Activated CD4-positive, alpha-beta memory T cell treated with anti-CD3 and anti-CD28 coated beads for 36 hours (primary cell): ENCODE measurements at regions of chr18 and their contacts with region 1.

Region 1: DNA sequence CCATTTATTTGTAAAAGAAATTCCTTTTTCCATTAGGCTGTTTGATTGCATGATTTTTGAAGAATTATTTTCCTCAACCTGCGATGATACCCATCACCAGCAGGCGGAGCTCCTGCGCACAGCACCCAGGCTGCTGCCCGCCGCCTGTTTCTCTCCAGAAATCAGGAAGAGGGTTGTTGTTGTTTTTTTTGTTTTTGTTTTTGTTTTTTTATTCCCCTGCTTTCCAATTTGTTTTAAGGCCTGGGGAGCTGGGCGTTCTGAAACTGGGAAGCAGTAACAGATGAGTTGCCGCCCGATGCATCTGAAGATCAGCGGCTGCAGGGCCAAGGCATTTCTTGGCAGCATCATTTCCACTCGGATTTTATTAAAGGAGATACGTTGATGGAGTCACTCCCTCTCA is 132.1 kb downstream of the MBP start:
- DNase-seq: peak; percentile 62
- H3K4me3 Mint-ChIP-seq: no peak overlapping the region
- H3K27ac Mint-ChIP-seq: no peak overlapping the region
- H3K4me1 Mint-ChIP-seq: peaks cover 17% of the 10 kb centered on the region
- H3K27me3 Mint-ChIP-seq: no peaks in the 10 kb centered on the region

Region 2: DNA sequence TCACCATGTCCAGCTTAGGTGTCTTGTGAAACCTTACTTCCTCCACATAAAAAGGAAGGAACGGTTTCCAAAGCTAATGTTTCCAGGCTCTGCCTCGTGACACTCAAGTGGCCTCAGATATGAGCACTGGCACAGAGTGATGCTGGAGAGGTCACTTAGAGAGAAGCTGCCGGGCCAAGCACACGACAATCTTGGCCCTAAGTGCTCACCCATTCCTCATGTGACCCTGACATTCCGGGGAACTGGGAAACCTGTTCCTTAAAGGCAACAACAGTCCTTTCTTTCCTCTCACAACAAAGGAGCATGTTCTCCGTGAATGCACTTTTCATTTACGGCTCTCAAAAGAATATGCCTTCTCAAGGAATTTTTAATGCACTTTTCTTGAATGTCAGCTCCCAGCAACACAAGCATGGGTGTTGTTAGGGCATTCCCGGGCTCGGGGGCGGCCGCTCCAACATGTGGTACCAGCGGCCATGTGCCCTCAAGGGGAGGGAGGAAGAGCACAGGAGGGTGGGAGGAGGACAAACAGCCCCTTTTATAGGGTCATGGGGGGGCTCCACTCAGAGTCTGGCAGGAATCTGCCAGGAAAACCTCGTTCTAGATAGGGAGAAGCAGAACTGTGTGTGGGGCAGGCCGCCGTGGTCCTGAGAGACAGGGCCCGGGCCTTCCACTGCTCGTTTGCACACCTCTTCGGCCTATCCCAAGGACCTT is 13.4 kb after region 1 on chr18:
- CTCF ChIA-PET with region 1: interaction called, 26 read pairs
- POLR2A ChIA-PET with region 1: no interaction called
- intact Hi-C with region 1: no loop called
- DNase-seq: no peak
- H3K4me3 Mint-ChIP-seq: no peak overlapping the region
- H3K27ac Mint-ChIP-seq: no peak overlapping the region
- H3K4me1 Mint-ChIP-seq: peaks cover 19% of the 10 kb centered on the region
- H3K27me3 Mint-ChIP-seq: no peaks in the 10 kb centered on the region

Region 3: DNA sequence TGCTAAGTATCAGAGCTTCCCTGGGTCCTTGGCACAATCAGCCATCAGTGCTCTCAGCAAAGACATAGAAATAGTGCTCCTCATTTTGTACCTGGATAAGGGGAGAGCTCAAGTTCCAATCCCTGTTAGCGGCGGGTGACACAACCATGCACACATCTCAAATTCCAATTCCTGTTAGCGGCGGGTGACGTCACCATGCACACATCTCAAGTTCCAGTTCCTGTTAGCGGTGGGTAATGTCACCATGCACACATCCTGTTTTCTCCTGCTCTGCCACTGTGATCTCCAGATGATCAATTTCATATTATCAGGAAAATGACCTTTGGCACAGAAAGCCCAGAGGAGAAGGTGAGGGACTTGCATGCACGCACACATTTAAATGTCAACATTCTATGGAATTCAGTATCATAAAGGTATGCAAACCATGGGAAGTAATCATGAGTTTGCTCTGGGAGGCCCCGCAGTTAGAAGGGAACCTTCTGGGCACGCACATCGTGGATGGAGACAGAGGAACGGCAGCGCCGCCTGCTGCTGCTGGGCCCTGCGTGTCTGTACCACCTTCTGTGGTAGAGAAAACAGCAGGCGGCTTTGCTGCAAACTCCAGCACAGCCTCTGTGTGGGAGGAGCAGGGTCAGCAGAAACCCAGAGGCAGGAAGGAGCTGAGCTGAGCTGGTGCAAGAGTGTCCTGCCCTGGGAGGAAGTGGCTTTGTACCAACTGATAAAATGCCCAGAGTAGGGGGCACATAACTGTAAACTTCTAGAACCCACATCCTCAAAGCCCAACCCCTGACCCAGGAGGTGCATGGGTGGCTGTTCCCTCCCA is 54.3 kb after region 1 on chr18:
- CTCF ChIA-PET with region 1: interaction called, 88 read pairs
- POLR2A ChIA-PET with region 1: interaction called, 3 read pairs
- intact Hi-C with region 1: no loop called
- DNase-seq: peak; percentile 90
- H3K4me3 Mint-ChIP-seq: peak overlapping the region; percentile 81
- H3K27ac Mint-ChIP-seq: peak overlapping the region; percentile 96
- H3K4me1 Mint-ChIP-seq: peaks cover 72% of the 10 kb centered on the region
- H3K27me3 Mint-ChIP-seq: no peaks in the 10 kb centered on the region

Region 4: GRCh38 chr18:77108001-77108692 is 107.6 kb after region 1 on chr18:
- CTCF ChIA-PET with region 1: interaction called, 10 read pairs
- POLR2A ChIA-PET with region 1: no interaction called
- intact Hi-C with region 1: loop called (anchors 2 kb)
- DNase-seq: peak; percentile 79
- H3K4me3 Mint-ChIP-seq: peak overlapping the region; percentile 31
- H3K27ac Mint-ChIP-seq: peak overlapping the region; percentile 71
- H3K4me1 Mint-ChIP-seq: peaks cover 92% of the 10 kb centered on the region
- H3K27me3 Mint-ChIP-seq: no peaks in the 10 kb centered on the region

Region 5: DNA sequence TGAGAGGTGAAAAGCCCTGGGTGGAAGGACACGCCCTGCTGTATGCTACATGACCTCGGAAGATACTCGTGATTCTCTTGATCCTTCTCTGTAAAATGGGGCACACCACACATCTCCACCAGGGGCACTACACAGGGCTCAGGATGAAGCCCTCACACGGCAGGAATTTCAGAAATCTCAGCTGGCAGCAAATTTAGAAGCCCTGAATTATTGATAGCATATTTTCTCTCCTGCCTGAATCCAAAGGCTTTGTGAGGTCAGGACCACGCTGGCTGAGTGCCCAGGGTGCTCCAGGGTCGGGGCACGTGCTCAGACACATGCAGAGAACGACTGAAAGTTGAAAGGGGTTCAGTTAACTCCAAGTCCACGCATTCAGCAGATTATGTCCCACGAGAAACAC is 207.0 kb after region 1 on chr18:
- CTCF ChIA-PET with region 1: interaction called, 92 read pairs
- POLR2A ChIA-PET with region 1: no interaction called
- intact Hi-C with region 1: loop called (anchors 1 kb)
- DNase-seq: peak; percentile 74
- H3K4me3 Mint-ChIP-seq: no peak overlapping the region
- H3K27ac Mint-ChIP-seq: peak overlapping the region; percentile 76
- H3K4me1 Mint-ChIP-seq: peaks cover 32% of the 10 kb centered on the region
- H3K27me3 Mint-ChIP-seq: no peaks in the 10 kb centered on the region

Region 6: GRCh38 chr18:77262470-77263142 is 262.1 kb after region 1 on chr18:
- CTCF ChIA-PET with region 1: no interaction called
- POLR2A ChIA-PET with region 1: no interaction called
- intact Hi-C with region 1: no loop called
- DNase-seq: no peak
- H3K4me3 Mint-ChIP-seq: no peak overlapping the region
- H3K27ac Mint-ChIP-seq: no peak overlapping the region
- H3K4me1 Mint-ChIP-seq: no peaks in the 10 kb centered on the region
- H3K27me3 Mint-ChIP-seq: peaks cover 11% of the 10 kb centered on the region

Region 7: DNA sequence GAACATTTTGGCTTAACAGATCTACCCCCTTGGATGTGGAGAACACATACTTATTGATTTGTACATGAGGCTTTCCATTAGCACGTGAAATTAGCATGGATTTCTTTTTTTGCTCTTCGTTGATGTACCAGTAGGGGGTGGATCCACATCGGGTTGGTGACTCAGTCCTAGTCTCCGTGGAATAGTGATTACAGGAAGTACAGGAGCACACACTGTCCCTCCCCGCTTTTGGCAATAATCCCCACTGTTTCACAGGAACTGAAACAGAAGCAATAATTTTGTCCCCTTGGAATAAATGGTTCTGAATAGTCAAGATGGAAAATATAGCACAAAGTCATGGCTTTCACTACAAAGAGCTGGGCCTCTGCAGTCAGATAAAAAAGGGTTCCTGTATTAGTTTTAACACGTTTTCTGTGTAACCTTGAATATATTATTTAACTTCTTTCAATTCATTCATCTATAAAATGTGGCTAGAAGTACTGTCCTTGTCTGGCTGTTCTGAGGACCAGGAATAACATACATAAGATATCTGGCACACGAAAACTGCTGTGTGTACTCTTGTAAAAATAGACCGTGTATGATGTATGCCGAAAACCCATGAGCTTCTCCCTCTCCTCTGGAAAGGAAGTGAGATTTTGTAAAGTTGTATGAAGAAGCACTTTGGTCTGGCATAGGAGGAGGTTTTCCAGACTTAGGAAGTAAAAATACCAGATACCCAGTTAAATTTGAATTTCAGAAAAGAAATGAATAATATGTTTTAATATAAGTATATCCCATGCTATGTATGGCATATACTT is 478.3 kb after region 1 on chr18:
- CTCF ChIA-PET with region 1: no interaction called
- POLR2A ChIA-PET with region 1: no interaction called
- intact Hi-C with region 1: no loop called
- DNase-seq: no peak
- H3K4me3 Mint-ChIP-seq: no peak overlapping the region
- H3K27ac Mint-ChIP-seq: no peak overlapping the region
- H3K4me1 Mint-ChIP-seq: no peaks in the 10 kb centered on the region
- H3K27me3 Mint-ChIP-seq: peaks cover 9% of the 10 kb centered on the region